Psoas muscle (tissue), 8 donors: ENCODE measurements at regions of chr12 and their contacts with region 1.

Region 1: DNA sequence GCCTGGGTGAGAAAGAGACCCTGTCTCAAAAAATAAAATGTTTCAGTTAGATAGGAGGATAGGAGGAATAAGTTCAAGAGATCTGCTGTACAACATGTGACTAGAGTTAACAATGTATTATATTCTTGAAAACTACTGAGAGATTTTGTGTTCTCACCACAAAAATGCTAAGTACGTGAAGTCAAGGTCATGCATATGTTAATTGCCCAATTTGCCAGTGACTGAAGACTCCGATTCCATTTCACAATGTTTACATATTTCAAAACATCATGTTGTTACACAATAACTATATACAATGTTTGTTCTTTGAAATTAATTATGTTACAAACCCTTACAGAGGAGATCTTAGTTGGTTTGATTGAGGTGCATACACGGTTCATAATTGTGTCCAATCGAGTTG is 52.1 kb downstream of the SLC15A4 start:
- DNase-seq: no peak
- ATAC-seq: no peak
- H3K4me3 ChIP-seq: no peak overlapping the region
- H3K27ac ChIP-seq: no peak overlapping the region
- H3K4me1 ChIP-seq: no peaks in the 10 kb centered on the region
- H3K27me3 ChIP-seq: peaks cover 0 to 2% (median 1%) of the 10 kb centered on the region in 3 donors
- CTCF ChIP-seq: no peak

Region 2: DNA sequence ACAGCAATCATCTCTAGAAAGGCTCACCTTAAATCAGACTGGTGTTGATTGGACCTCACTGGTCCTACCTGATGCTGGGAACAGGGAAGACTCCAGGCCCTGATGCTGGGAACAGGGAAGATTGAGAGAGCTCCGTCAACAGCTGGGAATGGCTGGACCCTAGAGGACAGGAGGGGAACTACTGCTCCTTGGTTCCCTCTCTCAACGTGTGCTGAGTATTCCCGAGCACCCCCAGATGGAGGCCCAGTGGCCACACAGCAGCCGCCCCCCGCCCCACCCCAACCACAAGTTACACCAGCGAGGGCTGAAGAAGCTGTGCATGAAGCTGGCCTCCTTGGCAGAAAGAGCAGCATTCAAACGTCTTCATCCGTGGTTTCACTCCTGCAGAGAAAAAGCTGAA is 188.2 kb before region 1 on chr12:
- intact Hi-C with region 1: no loop called
- DNase-seq: no peak
- ATAC-seq: no peak
- H3K4me3 ChIP-seq: no peak overlapping the region
- H3K27ac ChIP-seq: no peak overlapping the region
- H3K4me1 ChIP-seq: no peaks in the 10 kb centered on the region
- H3K27me3 ChIP-seq: no peaks in the 10 kb centered on the region
- CTCF ChIP-seq: no peak

Region 3: GRCh38 chr12:128951448-128951847 is 179.8 kb after region 1 on chr12:
- intact Hi-C with region 1: loop called in 1 of 2 experiments (anchors 10 kb)
- DNase-seq: no peak
- ATAC-seq: no peak
- H3K4me3 ChIP-seq: no peak overlapping the region
- H3K27ac ChIP-seq: no peak overlapping the region
- H3K4me1 ChIP-seq: no peaks in the 10 kb centered on the region
- H3K27me3 ChIP-seq: peaks cover 0 to 4% (median 0%) of the 10 kb centered on the region in 3 donors
- CTCF ChIP-seq: no peak